ENCODE measurements at regions of chr19 and their contacts with region 1.

Region 1: DNA sequence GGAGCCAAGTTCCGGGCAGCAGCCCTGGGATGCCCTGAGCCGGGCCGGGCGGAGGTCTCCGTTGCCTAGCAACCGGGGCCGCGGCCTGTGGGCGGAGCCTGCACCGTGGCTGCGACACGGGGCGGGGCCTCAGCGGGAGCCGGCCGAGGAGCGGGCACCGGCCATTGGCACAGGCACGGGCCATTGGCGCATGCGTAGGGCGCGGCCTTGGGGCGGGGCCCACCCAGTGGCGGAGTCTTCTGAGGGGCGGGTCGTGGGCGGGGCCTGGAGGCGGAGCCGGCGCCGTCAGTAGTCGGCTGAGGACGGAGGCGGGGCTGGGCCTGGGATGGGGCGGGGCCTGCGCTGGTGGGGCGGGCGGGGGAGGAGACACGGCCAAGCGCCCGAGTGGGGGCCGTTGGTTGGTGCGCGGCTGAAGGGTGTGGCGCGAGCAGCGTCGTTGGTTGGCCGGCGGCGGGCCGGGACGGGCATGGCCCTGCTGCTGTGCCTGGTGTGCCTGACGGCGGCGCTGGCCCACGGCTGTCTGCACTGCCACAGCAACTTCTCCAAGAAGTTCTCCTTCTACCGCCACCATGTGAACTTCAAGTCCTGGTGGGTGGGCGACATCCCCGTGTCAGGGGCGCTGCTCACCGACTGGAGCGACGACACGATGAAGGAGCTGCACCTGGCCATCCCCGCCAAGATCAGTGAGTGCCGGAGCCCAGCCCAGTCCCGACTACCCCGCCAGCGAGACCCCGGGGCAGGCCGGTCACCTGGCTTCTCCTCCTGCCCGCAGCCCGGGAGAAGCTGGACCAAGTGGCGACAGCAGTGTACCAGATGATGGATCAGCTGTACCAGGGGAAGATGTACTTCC is at the start of gene IZUMO4:
- DNase-seq: peak; percentile 32
- ATAC-seq: peak; percentile 88
- H3K4me3 ChIP-seq: peak within 1 kb of the TSS; percentile 62 to 69
- H3K27ac ChIP-seq: peak within 1 kb of the TSS; percentile 78
- H3K4me1 ChIP-seq: 0 out of 2 replicates have a peak, but pooled peaks cover 3% of the 10 kb centered on the region
- H3K27me3 ChIP-seq: no peaks in the 10 kb centered on the region
- CTCF ChIP-seq: no peak; the same call in 1 of the 2 replicates
- total RNA-seq, gene IZUMO4: 5.4 TPM

Region 2: DNA sequence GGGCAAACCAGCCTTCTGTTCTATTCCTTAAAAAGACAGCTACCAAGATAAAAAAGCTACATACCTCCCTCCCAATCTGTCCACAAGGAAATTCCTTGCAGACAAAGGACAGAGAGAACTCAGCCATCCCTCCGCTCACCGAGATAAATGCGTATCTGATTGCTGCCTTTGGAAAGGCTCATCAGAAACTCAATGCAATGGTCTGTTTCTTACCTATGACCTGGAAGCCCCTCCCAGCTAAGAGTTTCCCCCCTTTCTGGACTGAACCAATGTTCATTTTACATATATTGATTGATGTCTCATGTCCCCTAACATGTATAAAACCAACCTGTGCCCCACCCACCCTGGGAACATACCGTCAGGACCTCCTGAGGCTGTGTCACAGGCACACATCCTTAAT is 92.8 kb before region 1 on chr19:
- CTCF ChIA-PET with region 1: no interaction called
- POLR2A ChIA-PET with region 1: interaction called, 23 read pairs
- in situ Hi-C with region 1: no loop called
- intact Hi-C with region 1: no loop called
- DNase-seq: no peak
- ATAC-seq: no peak
- H3K4me3 ChIP-seq: no peak overlapping the region
- H3K27ac ChIP-seq: no peak overlapping the region
- H3K4me1 ChIP-seq: no peaks in the 10 kb centered on the region
- H3K27me3 ChIP-seq: no peaks in the 10 kb centered on the region
- CTCF ChIP-seq: no peak

Region 3: DNA sequence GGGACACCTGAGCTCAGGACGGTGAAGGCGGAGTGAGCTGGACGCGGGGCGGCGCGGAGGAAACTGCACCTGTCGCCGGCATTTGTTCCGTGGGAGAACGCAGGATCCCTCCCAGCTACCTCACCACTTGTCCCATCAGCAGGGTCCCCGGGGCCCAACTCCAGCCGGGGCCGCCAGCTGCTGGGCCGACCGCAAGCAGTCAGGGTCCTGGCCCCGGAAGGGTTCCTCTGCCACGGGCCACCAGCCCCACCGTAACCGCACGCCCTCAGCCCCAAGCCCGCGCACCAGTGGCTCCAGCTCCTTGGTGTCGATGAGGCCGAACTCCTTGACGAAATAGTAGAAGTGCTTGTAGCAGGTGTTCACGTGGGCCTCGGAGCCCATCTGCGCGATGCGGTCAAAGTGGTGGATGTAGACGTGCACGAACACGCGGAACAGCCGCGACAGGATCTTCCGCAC is 20.2 kb before region 1 on chr19:
- CTCF ChIA-PET with region 1: no interaction called
- POLR2A ChIA-PET with region 1: no interaction called
- in situ Hi-C with region 1: no loop called
- intact Hi-C with region 1: loop called (anchors 2 kb)
- DNase-seq: no peak
- ATAC-seq: no peak
- H3K4me3 ChIP-seq: no peak overlapping the region
- H3K27ac ChIP-seq: no peak overlapping the region
- H3K4me1 ChIP-seq: no peaks in the 10 kb centered on the region
- H3K27me3 ChIP-seq: no peaks in the 10 kb centered on the region
- CTCF ChIP-seq: no peak

Region 4: DNA sequence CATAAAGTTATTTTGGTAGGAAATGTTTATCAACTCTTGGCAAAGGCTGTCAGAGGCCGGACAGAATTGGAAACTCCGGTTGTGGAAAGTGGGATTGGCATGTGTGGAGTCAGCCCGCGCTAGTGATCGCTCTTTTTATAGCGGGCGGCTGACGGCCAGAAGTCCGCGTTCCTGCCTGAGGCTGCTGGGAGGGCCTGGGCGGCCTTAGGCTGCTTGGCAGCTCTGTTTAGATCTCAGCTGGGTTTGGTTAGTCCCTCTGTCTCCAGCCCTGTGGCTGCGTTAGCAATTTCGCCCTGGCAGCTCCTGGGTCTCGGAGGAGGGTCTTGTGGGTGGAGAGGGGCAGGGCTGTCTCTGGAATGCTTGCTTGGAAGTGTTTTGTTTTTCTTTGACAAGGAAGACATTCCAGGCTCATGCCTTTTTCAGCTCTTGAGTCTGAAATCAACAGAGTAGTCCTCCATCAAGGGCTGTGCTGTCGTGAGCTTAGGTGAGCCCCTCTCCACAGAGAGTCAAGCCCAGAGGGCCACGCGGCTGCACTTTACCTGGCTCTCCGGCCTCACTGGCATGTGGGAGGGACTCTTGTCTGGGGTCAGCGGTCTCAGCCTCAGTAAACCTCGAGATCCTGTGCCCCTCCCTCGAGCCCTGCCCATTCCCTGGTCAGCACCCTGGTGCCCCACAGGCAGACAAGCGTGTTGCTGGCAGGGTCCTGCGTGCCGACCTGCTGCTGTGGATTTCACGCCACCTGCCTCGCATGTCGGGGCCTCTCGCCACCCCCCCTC is 89.6 kb after region 1 on chr19:
- CTCF ChIA-PET with region 1: no interaction called
- POLR2A ChIA-PET with region 1: no interaction called
- in situ Hi-C with region 1: no loop called
- intact Hi-C with region 1: no loop called
- DNase-seq: no peak
- ATAC-seq: no peak
- H3K4me3 ChIP-seq: no peak overlapping the region
- H3K27ac ChIP-seq: no peak overlapping the region
- H3K4me1 ChIP-seq: no peaks in the 10 kb centered on the region
- H3K27me3 ChIP-seq: no peaks in the 10 kb centered on the region
- CTCF ChIP-seq: no peak